PC-3 (cell line): ENCODE measurements at regions of chr2 and their contacts with region 1.

Region 1: GRCh38 chr2:230712443-230713330 is at the start of gene CAB39:
- DNase-seq: peak; percentile 92
- ATAC-seq: peak; percentile 80
- H3K4me3 ChIP-seq: peak within 1 kb of the TSS; percentile 100
- H3K27ac ChIP-seq: peak within 1 kb of the TSS; percentile 92
- H3K4me1 ChIP-seq: peaks cover 28% of the 10 kb centered on the region
- H3K27me3 ChIP-seq: no peaks in the 10 kb centered on the region
- CTCF ChIP-seq: peak; percentile 72
- total RNA-seq, gene CAB39: 52.5 and 59.6 TPM in 2 replicates

Region 2: GRCh38 chr2:230411570-230412370 is 300.9 kb before region 1 on chr2:
- CTCF ChIA-PET with region 1: no interaction called
- POLR2A ChIA-PET with region 1: no interaction called
- intact Hi-C with region 1: loop called (anchors 10 kb)
- DNase-seq: peak; percentile 56
- ATAC-seq: peak; percentile 69
- H3K4me3 ChIP-seq: peak overlapping the region; percentile 78
- H3K27ac ChIP-seq: no peak overlapping the region
- H3K4me1 ChIP-seq: peaks cover 19% of the 10 kb centered on the region
- H3K27me3 ChIP-seq: no peaks in the 10 kb centered on the region
- CTCF ChIP-seq: no peak

Region 3: GRCh38 chr2:230589497-230590015 is 123.1 kb before region 1 on chr2:
- CTCF ChIA-PET with region 1: no interaction called
- POLR2A ChIA-PET with region 1: no interaction called
- intact Hi-C with region 1: no loop called
- DNase-seq: no peak
- ATAC-seq: no peak
- H3K4me3 ChIP-seq: no peak overlapping the region
- H3K27ac ChIP-seq: no peak overlapping the region
- H3K4me1 ChIP-seq: no peaks in the 10 kb centered on the region
- H3K27me3 ChIP-seq: no peaks in the 10 kb centered on the region
- CTCF ChIP-seq: no peak

Region 4: DNA sequence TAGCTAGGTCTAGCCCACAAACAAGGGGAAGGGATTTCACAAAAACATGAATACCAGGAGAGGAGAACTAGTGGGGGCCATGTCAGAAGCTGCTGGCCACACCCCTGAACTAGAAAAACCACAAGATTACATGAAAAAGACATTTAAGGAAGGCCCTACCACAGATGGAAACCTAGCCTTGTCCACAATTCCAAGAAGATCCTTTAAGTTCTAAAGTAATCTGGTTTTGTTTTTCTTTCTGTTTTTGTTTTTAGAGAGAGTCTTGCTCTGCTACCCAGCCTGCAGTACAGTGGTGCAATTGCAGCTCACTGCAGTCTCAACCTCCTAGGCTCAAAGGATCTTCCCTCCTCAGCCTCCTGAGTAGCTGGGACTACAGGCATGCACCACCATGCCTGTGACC is 34.2 kb before region 1 on chr2:
- CTCF ChIA-PET with region 1: interaction called, 10 read pairs
- POLR2A ChIA-PET with region 1: no interaction called
- intact Hi-C with region 1: no loop called
- DNase-seq: no peak
- ATAC-seq: no peak
- H3K4me3 ChIP-seq: no peak overlapping the region
- H3K27ac ChIP-seq: no peak overlapping the region
- H3K4me1 ChIP-seq: peaks cover 23% of the 10 kb centered on the region
- H3K27me3 ChIP-seq: no peaks in the 10 kb centered on the region
- CTCF ChIP-seq: no peak

Region 5: DNA sequence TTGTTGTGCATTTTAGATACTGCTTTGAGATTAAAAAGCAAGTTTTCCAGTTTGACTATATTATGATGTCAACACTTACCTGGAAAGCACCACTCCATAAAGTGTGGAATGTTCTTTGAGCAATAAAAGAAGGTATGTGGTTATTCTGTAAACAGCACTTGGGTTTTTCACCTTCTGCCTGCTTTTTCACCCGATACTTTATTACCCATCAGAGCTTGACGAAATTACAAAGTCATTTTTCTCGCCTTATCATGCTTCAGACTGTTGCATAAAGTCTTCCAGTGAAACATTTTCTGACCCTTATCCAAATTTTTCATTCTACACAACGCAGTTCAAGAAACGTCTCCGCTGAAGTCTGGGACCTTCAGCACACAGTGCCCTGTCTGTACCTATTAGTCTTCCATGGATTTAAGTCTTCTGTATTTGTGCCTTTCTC is 25.1 kb after region 1 on chr2:
- CTCF ChIA-PET with region 1: no interaction called
- POLR2A ChIA-PET with region 1: interaction called, 8 read pairs
- intact Hi-C with region 1: loop called (anchors 2 kb)
- DNase-seq: peak; percentile 85
- ATAC-seq: peak; percentile 48
- H3K4me3 ChIP-seq: peak overlapping the region; percentile 53
- H3K27ac ChIP-seq: peak overlapping the region; percentile 95
- H3K4me1 ChIP-seq: peaks cover 60% of the 10 kb centered on the region
- H3K27me3 ChIP-seq: no peaks in the 10 kb centered on the region
- CTCF ChIP-seq: no peak

Region 6: DNA sequence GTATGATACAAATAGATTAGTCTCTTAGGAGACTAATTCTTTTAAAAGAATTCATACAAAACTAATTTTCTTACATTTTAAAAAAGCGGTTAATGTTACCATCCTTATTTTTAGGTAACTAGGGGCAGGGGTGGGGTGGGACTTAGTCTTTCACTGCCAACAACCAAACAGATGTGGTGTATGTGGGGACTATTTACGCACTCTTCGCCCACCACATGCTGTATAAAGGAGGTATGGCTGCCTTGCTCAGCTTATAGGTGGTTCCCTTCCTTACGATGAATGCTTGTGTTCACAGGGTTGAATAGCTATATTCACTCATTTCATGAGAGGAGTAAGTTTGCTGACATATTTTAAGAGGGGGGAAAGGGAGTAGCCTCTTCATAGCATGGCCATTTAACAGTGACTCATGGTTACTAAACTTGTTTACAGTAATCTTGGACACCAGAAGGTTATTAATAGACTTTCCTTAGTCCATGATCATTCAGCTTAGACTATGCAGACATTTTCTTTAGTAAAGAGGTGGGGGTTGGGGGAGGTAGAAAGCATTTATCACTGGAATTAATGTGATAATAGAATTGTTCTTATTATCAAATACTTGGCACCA is 61.8 kb after region 1 on chr2:
- CTCF ChIA-PET with region 1: no interaction called
- POLR2A ChIA-PET with region 1: interaction called, 22 read pairs
- intact Hi-C with region 1: loop called (anchors 1 kb)
- DNase-seq: peak; percentile 90
- ATAC-seq: peak; percentile 88
- H3K4me3 ChIP-seq: peak overlapping the region; percentile 38; the same call in 1 of the 2 replicates
- H3K27ac ChIP-seq: peak overlapping the region; percentile 97
- H3K4me1 ChIP-seq: peaks cover 59% of the 10 kb centered on the region
- H3K27me3 ChIP-seq: no peaks in the 10 kb centered on the region
- CTCF ChIP-seq: no peak